K562 (cell line): ENCODE measurements at regions of chr2 and their contacts with region 1.

Region 1: DNA sequence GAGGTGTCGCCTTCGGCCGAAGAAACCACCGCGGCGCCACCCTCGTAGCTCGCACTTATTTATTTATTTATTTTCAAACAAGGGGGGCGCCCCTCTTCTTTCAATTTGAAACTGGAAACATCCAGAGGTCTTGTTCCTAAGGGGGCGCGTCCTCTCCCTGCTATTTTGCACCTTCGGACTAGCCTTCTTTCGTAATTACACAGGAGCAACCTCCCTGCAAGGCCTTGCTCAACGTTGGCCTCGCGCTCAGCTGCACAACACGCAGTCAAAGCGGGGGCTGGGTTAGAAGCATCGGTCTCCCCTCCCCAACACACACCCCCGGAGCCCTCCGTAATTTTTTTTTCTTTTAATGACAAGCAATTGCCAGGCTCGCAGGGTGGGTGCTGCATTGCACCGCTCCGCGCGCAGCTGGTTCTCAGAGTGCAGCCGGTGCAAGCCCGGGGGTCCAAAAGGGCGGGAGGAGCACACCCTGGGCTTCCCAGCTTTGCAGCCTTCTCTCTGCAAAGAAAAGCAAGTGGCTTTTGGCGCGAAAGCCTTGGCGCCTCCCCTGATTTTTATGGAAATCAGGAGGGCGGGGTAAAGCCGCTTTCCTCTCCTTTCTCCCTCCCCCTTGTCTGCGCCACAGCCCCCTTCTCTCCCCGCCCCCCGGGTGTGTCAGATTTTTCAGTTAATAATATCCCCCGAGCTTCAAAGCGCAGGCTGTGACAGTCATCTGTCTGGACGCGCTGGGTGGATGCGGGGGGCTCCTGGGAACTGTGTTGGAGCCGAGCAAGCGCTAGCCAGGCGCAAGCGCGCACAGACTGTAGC is at the start of gene MYCN:
- DNase-seq: peak in 1 of 4 experiments; percentile 12
- ATAC-seq: peak; percentile 60
- H3K4me3 ChIP-seq: no peak within 1 kb of the TSS
- H3K27ac ChIP-seq: no peak within 1 kb of the TSS
- H3K4me1 ChIP-seq: peaks cover 0 to 15% of the 10 kb centered on the region in 2 experiments; a peak in 2 of 5 replicates
- H3K27me3 ChIP-seq: peaks cover 10 to 40% of the 10 kb centered on the region in 2 experiments; a peak in 4 of 5 replicates
- CTCF ChIP-seq: peak; percentile 72 to 79 (median 77); a peak in 5 of 6 replicates
- EP300 ChIP-seq: no peak
- POLR2A ChIP-seq: no peak
- RAD21 ChIP-seq: peak; percentile 77 to 82
- polyA plus RNA-seq, gene MYCN: not detected

Region 2: GRCh38 chr2:16281451-16282336 is 341.6 kb after region 1 on chr2:
- CTCF ChIA-PET with region 1: interaction called, 7 read pairs
- POLR2A ChIA-PET with region 1: no interaction called
- in situ Hi-C with region 1: no loop called
- intact Hi-C with region 1: loop called (anchors 2 kb)
- DNase-seq: peak; percentile 27 to 42 (median 40)
- ATAC-seq: peak; percentile 96
- H3K4me3 ChIP-seq: no peak overlapping the region
- H3K27ac ChIP-seq: no peak overlapping the region
- H3K4me1 ChIP-seq: no peaks in the 10 kb centered on the region
- H3K27me3 ChIP-seq: peaks cover 5 to 20% of the 10 kb centered on the region in 2 experiments; a peak in 2 of 5 replicates
- CTCF ChIP-seq: peak; percentile 31 to 56 (median 48); a peak in 5 of 6 replicates
- EP300 ChIP-seq: no peak
- POLR2A ChIP-seq: no peak
- RAD21 ChIP-seq: peak; percentile 36 to 57; a peak in 3 of 4 replicates

Region 3: GRCh38 chr2:16487686-16488085 is 547.6 kb after region 1 on chr2:
- CTCF ChIA-PET with region 1: no interaction called
- POLR2A ChIA-PET with region 1: no interaction called
- in situ Hi-C with region 1: loop called (anchors 25 kb)
- intact Hi-C with region 1: loop called (anchors 2 kb)
- DNase-seq: peak in 1 of 4 experiments; percentile 12
- ATAC-seq: no peak
- H3K4me3 ChIP-seq: no peak overlapping the region
- H3K27ac ChIP-seq: no peak overlapping the region
- H3K4me1 ChIP-seq: no peaks in the 10 kb centered on the region
- H3K27me3 ChIP-seq: no peaks in the 10 kb centered on the region
- CTCF ChIP-seq: peak; percentile 30 to 55 (median 39)
- EP300 ChIP-seq: no peak
- POLR2A ChIP-seq: no peak
- RAD21 ChIP-seq: peak; percentile 70 to 73

Region 4: GRCh38 chr2:16507655-16508489 is 567.8 kb after region 1 on chr2:
- CTCF ChIA-PET with region 1: no interaction called
- POLR2A ChIA-PET with region 1: no interaction called
- in situ Hi-C with region 1: no loop called
- intact Hi-C with region 1: loop called (anchors 5 kb)
- DNase-seq: peak; percentile 23 to 48 (median 42)
- ATAC-seq: peak; percentile 78
- H3K4me3 ChIP-seq: no peak overlapping the region
- H3K27ac ChIP-seq: no peak overlapping the region
- H3K4me1 ChIP-seq: peaks cover 0 to 9% of the 10 kb centered on the region in 2 experiments; a peak in 1 of 5 replicates
- H3K27me3 ChIP-seq: peaks cover 7 to 22% of the 10 kb centered on the region in 2 experiments; a peak in 3 of 5 replicates
- CTCF ChIP-seq: peak; percentile 35 to 59 (median 40); a peak in 4 of 6 replicates
- EP300 ChIP-seq: no peak
- POLR2A ChIP-seq: no peak
- RAD21 ChIP-seq: peak; percentile 53 to 73